Activated CD4-positive, alpha-beta T cell treated with anti-CD3 and anti-CD28 coated beads, Interleukin-2, amount 10 ng/mL, durations not matched to agents 24 days and 14 days (primary cell): ENCODE measurements at regions of chr10 and their contacts with region 1.

Region 1: DNA sequence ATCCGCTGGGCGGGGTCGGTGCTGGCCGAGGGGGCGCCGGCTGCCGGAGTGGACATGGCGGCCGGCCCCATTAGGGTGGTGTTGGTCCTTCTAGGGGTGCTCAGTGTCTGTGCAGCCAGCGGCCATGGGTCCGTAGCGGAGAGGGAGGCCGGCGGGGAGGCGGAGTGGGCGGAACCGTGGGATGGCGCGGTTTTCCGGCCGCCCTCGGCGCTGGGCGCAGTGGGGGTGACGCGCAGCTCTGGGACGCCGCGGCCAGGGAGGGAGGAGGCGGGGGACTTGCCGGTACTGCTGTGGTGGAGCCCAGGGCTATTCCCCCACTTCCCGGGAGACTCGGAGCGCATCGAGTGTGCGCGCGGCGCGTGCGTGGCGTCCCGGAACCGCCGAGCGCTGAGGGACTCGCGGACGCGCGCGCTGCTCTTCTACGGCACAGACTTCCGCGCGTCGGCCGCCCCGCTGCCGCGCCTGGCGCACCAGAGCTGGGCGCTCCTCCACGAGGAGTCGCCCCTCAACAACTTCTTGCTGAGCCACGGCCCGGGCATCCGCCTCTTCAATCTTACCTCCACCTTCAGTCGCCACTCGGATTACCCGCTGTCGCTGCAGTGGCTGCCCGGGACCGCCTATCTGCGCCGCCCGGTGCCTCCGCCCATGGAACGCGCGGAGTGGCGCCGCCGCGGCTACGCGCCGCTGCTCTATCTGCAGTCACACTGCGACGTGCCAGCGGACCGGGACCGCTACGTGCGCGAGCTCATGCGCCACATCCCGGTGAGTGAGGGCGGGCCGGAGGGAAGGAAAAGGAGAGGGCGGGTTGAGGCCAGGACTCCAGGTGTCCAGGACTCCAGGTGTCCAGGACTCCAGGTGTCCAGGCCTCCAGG is 9.3 kb upstream of the CHCHD1 start:
- DNase-seq: peak; percentile 96
- H3K4me3 Mint-ChIP-seq: peak overlapping the region; percentile 86
- H3K27ac Mint-ChIP-seq: peak overlapping the region; percentile 95
- H3K4me1 Mint-ChIP-seq: peaks cover 59% of the 10 kb centered on the region
- H3K27me3 Mint-ChIP-seq: no peaks in the 10 kb centered on the region

Region 2: DNA sequence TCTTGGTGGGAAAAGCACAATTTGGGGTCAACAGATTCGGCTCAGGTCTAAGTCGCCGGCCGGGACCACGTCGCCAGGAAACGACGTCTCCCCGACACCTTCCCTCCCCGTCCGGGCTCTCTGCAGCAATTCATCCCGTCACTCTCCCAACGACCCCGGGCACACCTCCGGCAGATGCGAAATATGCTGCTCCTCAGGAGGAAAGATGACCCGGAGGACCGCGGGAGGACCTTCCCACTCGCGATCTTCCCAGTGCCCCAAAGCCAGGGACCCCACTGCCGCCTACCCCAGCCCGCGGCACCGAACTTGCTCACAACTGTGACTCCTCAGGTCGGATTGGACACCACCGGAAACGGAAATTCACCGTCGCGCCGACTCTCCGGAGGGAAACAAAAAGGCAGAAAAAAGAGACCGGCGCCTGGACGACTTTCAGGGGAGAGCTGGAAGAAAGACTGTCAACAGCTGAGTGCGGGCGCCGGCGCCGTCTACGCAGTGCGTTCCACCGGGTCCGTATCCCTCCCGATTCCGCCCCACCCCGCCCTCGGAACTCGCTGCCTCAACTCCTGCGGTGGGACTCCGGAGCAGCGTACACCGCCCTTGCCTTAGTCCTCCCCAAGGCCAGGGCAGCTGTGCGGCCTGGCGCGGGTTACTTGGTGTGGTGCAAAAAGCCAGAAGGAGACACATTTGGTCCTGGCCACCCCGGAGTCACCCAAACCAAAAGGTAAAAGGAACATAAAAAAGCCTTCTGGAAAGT is 42.2 kb before region 1 on chr10:
- intact Hi-C with region 1: loop called (anchors 1 kb)
- DNase-seq: peak; percentile 99
- H3K4me3 Mint-ChIP-seq: peak overlapping the region; percentile 100
- H3K27ac Mint-ChIP-seq: peak overlapping the region; percentile 99
- H3K4me1 Mint-ChIP-seq: peaks cover 4% of the 10 kb centered on the region
- H3K27me3 Mint-ChIP-seq: no peaks in the 10 kb centered on the region

Region 3: GRCh38 chr10:73785221-73785720 is 12.8 kb after region 1 on chr10 and contains the start of gene ZSWIM8:
- intact Hi-C with region 1: loop called (anchors 1 kb)
- DNase-seq: peak; percentile 94
- H3K4me3 Mint-ChIP-seq: peak within 1 kb of the TSS; percentile 91
- H3K27ac Mint-ChIP-seq: peak within 1 kb of the TSS; percentile 98
- H3K4me1 Mint-ChIP-seq: peaks cover 39% of the 10 kb centered on the region
- H3K27me3 Mint-ChIP-seq: no peaks in the 10 kb centered on the region
- total RNA-seq, gene ZSWIM8: 50.8 and 53.5 TPM in 2 replicates

Region 4: DNA sequence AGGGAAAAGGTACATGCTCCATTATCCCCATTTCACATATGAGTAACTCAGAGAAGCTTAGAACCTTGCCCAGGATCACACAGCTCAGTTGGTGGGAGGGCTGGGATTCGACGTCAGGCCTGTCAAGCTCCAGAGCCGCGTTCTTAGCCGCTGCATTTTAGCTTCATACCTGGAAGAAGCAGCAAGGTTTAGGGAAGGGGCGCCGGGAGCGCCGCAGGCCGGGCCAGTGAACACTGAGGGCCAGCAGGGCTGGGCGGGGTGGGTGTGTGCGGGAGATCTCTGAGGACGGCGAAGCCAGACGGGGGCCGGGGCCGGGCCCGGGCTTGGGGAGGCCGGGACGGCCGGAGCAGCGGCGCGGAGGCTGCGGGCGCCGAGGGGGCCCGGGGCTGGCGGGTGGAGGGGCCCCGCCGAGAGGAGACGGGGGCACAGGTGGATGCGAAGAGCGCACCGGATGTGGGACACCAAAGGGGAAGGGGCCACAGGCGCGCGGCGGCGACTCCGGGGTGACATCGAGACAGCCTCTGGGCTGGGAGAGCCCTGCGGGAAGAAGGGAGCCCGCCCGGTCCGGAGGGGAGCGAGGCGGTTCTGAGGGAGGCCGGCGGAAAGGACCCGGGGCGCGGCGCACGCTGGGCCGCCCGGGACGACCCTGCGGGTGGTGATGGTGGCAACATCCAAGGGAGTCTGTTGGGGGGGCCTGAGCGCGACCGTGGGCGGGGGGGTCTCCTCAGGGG is 38.4 kb after region 1 on chr10:
- intact Hi-C with region 1: loop called (anchors 5 kb)
- DNase-seq: peak; percentile 89
- H3K4me3 Mint-ChIP-seq: peak overlapping the region; percentile 87
- H3K27ac Mint-ChIP-seq: peak overlapping the region; percentile 94
- H3K4me1 Mint-ChIP-seq: peaks cover 43% of the 10 kb centered on the region
- H3K27me3 Mint-ChIP-seq: no peaks in the 10 kb centered on the region

Region 5: GRCh38 chr10:73879296-73880173 is 107.0 kb after region 1 on chr10:
- intact Hi-C with region 1: loop called (anchors 5 kb)
- DNase-seq: peak; percentile 98
- H3K4me3 Mint-ChIP-seq: peak overlapping the region; percentile 3
- H3K27ac Mint-ChIP-seq: peak overlapping the region; percentile 61
- H3K4me1 Mint-ChIP-seq: peaks cover 31% of the 10 kb centered on the region
- H3K27me3 Mint-ChIP-seq: peaks cover 4% of the 10 kb centered on the region

Region 6: DNA sequence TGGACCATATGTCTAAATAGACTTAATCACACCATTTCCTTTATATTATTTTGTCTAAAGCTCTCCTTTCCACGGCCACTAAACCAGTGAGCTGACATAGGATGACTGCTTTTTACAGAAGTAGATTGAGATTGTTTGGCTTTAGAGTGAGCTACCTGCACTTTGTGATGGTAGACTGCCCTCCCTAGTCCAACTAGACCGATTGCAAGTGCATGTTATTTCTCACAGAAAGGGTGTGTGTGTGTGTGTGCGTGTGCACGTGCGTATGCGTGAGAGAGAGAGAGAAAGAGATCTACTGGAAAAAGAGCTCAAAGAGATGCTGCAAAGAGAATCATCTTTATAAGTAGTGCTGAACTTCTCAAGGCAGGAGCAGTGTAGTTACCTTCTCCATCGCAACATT is 286.1 kb after region 1 on chr10:
- intact Hi-C with region 1: no loop called
- DNase-seq: peak; percentile 75
- H3K4me3 Mint-ChIP-seq: no peak overlapping the region
- H3K27ac Mint-ChIP-seq: no peak overlapping the region
- H3K4me1 Mint-ChIP-seq: peaks cover 32% of the 10 kb centered on the region
- H3K27me3 Mint-ChIP-seq: no peaks in the 10 kb centered on the region